ENCODE measurements at regions of chr1 and their contacts with region 1.

Region 1: DNA sequence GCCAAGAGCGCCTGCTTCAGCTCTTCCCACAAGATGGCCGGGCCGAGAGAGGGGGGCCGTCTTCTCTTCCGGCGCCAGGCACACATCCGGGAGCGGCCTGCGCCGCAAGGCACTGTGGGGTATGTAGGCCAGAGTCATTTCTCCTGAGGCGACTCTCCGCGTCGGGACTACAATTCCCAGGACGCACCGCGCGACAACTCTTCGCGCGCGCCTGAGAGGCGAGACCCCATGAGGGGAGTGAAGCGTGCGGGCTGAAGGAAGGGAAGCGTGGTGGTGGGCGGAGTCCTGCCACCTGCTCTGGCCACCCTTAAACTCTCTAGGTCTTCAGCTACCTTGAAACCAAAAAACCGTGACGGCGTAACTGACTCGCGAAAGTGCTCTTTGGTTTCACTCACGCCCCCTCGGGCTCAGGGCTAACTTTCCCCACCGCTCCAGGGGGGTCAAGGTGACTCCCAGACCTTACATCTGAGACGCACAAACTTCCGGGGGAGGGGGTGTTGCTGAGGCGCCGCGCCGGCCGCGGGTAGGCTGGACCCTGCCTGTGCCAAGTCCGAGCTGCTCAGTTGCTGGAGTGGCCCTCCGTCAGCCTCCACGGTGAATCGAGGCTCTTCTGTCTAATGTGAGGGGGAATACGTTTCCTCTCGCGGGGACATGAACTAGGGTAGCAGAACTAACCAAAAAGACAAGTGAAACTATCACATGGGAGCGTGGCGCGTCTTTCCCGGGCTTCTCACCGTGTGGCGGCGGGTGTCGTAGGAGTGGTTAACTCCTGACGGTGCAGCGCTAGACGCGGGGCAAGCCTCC is at the start of gene SERBP1:
- DNase-seq: peak; percentile 98
- ATAC-seq: peak; percentile 85
- H3K4me3 Mint-ChIP-seq: peak within 1 kb of the TSS; percentile 87
- H3K27ac Mint-ChIP-seq: peak within 1 kb of the TSS; percentile 93
- H3K4me1 Mint-ChIP-seq: peaks cover 43% of the 10 kb centered on the region
- H3K27me3 Mint-ChIP-seq: no peaks in the 10 kb centered on the region
- total RNA-seq, gene SERBP1: 250 to 347 TPM

Region 2: GRCh38 chr1:67418839-67419586 is 11.5 kb before region 1 on chr1:
- CTCF ChIA-PET with region 1: interaction called, 14 read pairs
- DNase-seq: no peak
- ATAC-seq: peak; percentile 43
- H3K4me3 Mint-ChIP-seq: no peak overlapping the region
- H3K27ac Mint-ChIP-seq: peak overlapping the region; percentile 75
- H3K4me1 Mint-ChIP-seq: peaks cover 62% of the 10 kb centered on the region
- H3K27me3 Mint-ChIP-seq: no peaks in the 10 kb centered on the region